PC-3 (cell line): ENCODE measurements at regions of chr14 and their contacts with region 1.

Region 1: GRCh38 chr14:96532632-96533031 is 30.4 kb downstream of the PAPOLA start:
- DNase-seq: no peak
- ATAC-seq: no peak
- H3K4me3 ChIP-seq: no peak overlapping the region
- H3K27ac ChIP-seq: no peak overlapping the region
- H3K4me1 ChIP-seq: no peaks in the 10 kb centered on the region
- H3K27me3 ChIP-seq: no peaks in the 10 kb centered on the region
- CTCF ChIP-seq: no peak

Region 2: GRCh38 chr14:96501742-96502617 is 30.7 kb before region 1 on chr14 and contains the start of gene PAPOLA:
- CTCF ChIA-PET with region 1: no interaction called
- POLR2A ChIA-PET with region 1: interaction called, 10 read pairs
- intact Hi-C with region 1: no loop called
- DNase-seq: peak; percentile 96
- ATAC-seq: peak; percentile 91
- H3K4me3 ChIP-seq: peak within 1 kb of the TSS; percentile 96
- H3K27ac ChIP-seq: peak within 1 kb of the TSS; percentile 63
- H3K4me1 ChIP-seq: peaks cover 33% of the 10 kb centered on the region
- H3K27me3 ChIP-seq: no peaks in the 10 kb centered on the region
- CTCF ChIP-seq: 0 out of 2 replicates have a peak, but pooled peaks have one; percentile 15
- total RNA-seq, gene PAPOLA: 111 and 123 TPM in 2 replicates